ENCODE measurements at regions of chr19 and their contacts with region 1.

Region 1: DNA sequence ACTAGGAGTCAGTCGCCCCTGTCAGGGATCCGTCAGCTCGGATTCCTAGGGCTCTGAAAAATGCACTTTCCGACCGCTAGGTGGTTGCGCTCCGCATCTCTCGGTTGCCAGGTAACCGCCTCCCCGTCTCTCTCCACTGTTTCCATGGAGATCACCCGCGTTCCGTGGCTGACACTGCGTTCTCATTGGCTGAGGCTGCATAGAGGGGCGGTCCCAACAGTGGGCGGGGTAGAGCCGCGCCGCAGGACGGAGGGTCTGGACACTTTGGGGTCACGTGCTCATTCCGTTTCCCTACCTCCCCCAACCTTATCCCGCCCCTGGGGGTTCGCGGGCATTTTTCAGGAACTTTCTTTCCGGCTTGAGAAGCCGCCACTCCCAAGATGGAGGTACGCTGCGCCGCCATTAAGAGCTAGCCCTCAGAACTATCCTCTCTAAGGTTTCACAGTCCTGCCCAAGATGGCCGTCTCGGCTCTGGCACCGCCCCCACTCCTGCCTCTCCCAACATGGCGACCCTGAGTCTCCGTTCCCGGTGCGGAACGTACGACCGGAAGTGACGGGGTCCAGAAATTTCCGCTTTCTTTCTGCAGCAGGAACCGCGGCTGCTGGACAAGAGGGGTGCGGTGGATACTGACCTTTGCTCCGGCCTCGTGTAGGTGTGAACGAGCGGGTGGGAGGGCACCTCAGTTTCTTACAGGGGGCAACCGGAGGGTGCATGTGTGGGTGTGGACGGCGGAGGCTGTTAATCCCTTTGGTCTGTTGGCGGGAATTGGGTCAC is at the starts of genes ODAD3 and PRKCSH:
- DNase-seq: peak; percentile 90 to 99 (median 97)
- ATAC-seq: peak; percentile 97
- H3K4me3 ChIP-seq: peak within 1 kb of the TSS; percentile 77
- H3K4me3 Mint-ChIP-seq: peak within 1 kb of the TSS; percentile 96 to 100 (median 99)
- H3K27ac ChIP-seq: peak within 1 kb of the TSS; percentile 77
- H3K27ac Mint-ChIP-seq: peak within 1 kb of the TSS; percentile 91 to 98 (median 97)
- H3K4me1 ChIP-seq: peaks cover 13 to 16% of the 10 kb centered on the region in 2 donors
- H3K4me1 Mint-ChIP-seq: peaks cover 10 to 34% (median 24%) of the 10 kb centered on the region in 7 donors
- H3K27me3 ChIP-seq: no peaks in the 10 kb centered on the region
- H3K27me3 Mint-ChIP-seq: peaks cover 0 to 8% (median 0%) of the 10 kb centered on the region in 5 donors
- total RNA-seq, gene ODAD3: not detected
- total RNA-seq, gene PRKCSH: 254 to 332 (median 288) TPM

Region 2: GRCh38 chr19:11090054-11090900 is 345.0 kb before region 1 on chr19:
- CTCF ChIA-PET with region 1: no interaction called
- POLR2A ChIA-PET with region 1: no interaction called
- intact Hi-C with region 1: loop called in 1 of 2 experiments (anchors 1 kb)
- DNase-seq: peak; percentile 89 to 97 (median 96)
- ATAC-seq: peak; percentile 90
- H3K4me3 ChIP-seq: peak overlapping the region; percentile 83
- H3K4me3 Mint-ChIP-seq: peak overlapping the region; percentile 85 to 94 (median 89)
- H3K27ac ChIP-seq: peak overlapping the region; percentile 91
- H3K27ac Mint-ChIP-seq: peak overlapping the region; percentile 88 to 99 (median 96)
- H3K4me1 ChIP-seq: peaks cover 24 to 41% of the 10 kb centered on the region in 2 donors
- H3K4me1 Mint-ChIP-seq: peaks cover 13 to 51% (median 44%) of the 10 kb centered on the region in 7 donors
- H3K27me3 ChIP-seq: no peaks in the 10 kb centered on the region
- H3K27me3 Mint-ChIP-seq: peaks cover 0 to 2% (median 0%) of the 10 kb centered on the region in 5 donors

Region 3: DNA sequence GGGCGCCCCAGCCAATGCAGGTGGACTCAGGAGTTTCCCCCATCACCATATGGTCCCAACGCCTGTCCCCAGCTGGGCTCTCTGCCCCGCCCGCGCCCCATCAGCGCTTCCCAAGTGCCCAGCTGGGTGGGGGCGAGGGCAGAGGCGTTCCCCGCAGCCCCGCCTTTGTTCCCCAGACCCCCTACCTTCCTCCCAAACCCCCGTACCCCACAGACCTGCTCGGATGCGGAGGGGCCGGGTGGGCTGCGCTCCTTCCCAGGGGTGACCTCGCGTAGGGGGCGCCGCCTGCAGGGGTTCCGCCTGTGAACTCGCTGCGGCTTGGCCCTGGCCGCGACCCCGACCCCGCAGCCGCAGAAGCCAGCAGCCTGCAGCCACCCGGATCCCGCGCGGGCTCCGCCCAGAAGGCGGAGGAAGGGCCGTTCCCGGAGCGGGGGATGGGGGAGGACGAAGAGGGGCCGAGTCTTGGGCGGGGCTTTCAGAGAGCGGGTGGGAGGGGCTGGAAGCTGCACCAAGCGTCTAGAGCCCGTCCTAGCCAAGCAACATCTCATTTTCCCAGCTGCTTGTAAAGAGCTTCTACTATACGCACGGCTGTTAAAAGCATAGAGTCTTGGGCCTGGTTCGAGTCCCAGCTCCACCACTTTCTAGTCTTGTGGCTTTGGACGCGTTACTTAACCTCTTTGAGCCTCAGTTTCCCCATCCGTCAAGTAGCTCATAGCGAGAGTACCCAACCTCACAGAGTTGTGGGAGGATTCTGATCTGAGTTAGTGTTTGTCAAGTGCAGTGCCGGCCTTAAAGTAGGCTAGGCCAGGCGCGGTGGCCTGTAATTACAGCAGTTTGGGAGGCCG is 95.8 kb before region 1 on chr19 and contains the start of gene RAB3D:
- CTCF ChIA-PET with region 1: no interaction called
- POLR2A ChIA-PET with region 1: no interaction called
- intact Hi-C with region 1: loop called in 1 of 2 experiments (anchors 1 kb)
- DNase-seq: peak; percentile 32 to 85 (median 57)
- ATAC-seq: peak; percentile 93
- H3K4me3 ChIP-seq: peak within 1 kb of the TSS; percentile 75
- H3K4me3 Mint-ChIP-seq: peak within 1 kb of the TSS; percentile 75 to 88 (median 80)
- H3K27ac ChIP-seq: peak within 1 kb of the TSS; percentile 63
- H3K27ac Mint-ChIP-seq: peak within 1 kb of the TSS in 6 of 9 donors; percentile 46 to 86 (median 64)
- H3K4me1 ChIP-seq: peaks cover 5 to 28% of the 10 kb centered on the region in 2 donors
- H3K4me1 Mint-ChIP-seq: peaks cover 0 to 35% (median 28%) of the 10 kb centered on the region in 7 donors
- H3K27me3 ChIP-seq: no peaks in the 10 kb centered on the region
- H3K27me3 Mint-ChIP-seq: no peaks in the 10 kb centered on the region
- total RNA-seq, gene RAB3D: 7.4 to 38.2 (median 8.8) TPM

Region 4: DNA sequence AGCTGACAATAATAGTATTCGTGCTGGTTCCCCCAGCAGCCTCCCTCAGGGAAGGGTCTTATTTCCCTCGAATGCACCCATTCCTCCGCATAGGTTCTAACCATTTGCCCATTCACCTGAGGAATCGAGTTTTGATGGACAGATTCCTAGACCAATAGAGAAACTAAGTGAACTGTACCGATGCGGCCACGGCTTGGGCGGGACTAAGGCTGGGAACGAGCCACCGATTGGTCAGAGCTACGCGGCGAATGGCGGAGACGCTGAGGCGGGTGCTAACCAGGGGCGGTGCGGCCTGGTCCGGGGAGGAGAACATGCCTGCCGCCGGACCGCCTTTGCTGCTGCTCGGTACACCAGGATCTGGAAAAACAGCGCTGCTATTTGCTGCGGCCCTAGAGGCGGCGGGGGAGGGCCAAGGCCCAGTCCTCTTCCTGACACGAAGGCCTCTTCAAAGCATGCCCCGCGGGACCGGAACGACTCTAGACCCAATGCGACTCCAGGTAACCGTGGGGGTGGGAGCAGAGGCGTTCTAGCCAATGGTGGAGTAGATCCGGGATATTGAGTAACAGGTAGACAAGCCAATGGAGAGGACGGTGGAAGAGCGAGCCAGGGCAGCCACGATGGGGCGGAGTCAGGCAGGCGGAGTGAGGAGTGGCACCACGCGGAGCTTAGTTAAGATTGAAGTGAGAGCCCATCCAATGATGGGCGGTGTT is 60.7 kb before region 1 on chr19 and contains the start of gene SWSAP1:
- CTCF ChIA-PET with region 1: interaction called, 3 read pairs
- POLR2A ChIA-PET with region 1: interaction called, 24 read pairs
- intact Hi-C with region 1: loop called (anchors 1 kb)
- DNase-seq: peak; percentile 87 to 99 (median 99)
- ATAC-seq: peak; percentile 94
- H3K4me3 ChIP-seq: peak within 1 kb of the TSS; percentile 92
- H3K4me3 Mint-ChIP-seq: peak within 1 kb of the TSS in 3 of 10 donors; percentile 31 to 56 (median 45)
- H3K27ac ChIP-seq: peak within 1 kb of the TSS; percentile 92
- H3K27ac Mint-ChIP-seq: peak within 1 kb of the TSS in 1 of 9 donors; percentile 22
- H3K4me1 ChIP-seq: peaks cover 21 to 30% of the 10 kb centered on the region in 2 donors
- H3K4me1 Mint-ChIP-seq: peaks cover 12 to 40% (median 28%) of the 10 kb centered on the region in 7 donors
- H3K27me3 ChIP-seq: no peaks in the 10 kb centered on the region
- H3K27me3 Mint-ChIP-seq: no peaks in the 10 kb centered on the region
- total RNA-seq, gene SWSAP1: 3.4 to 4.2 (median 4.0) TPM

Region 5: DNA sequence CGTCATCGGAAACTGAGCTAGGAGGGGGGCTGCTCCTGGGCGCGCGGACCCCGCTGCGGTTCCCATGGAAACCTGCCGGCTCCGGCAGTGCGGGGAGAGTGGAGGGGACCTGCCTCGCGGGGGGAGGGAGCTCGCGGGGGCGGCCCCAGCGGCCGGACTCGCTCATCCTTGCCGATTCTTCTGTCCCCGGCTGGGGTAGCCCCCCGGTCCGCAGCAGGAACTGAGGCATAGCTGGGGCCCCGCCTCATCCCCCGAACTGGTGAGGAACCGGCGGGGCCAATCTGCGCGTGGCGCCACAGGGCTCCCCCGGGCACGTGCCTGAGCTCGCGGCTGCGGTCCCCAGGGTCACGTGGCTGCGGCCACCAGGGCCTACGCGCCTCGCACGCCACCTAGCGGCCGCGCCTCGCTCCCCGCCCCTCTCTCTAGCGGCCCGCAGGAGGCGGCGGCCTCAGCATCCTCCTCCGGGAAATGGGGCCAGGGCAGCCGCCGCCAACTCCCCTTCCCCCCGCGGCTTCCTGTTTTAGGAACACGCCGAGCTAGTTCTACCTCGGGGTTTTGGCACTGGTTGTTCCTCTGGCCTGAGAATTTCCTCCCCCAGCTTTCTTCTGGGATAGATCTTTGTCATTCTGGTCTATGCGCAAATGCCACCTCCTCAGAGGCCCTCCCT is 47.3 kb after region 1 on chr19:
- CTCF ChIA-PET with region 1: interaction called, 3 read pairs
- POLR2A ChIA-PET with region 1: no interaction called
- intact Hi-C with region 1: loop called (anchors 1 kb)
- DNase-seq: peak; percentile 63 to 92 (median 76)
- ATAC-seq: peak; percentile 92
- H3K4me3 ChIP-seq: peak overlapping the region; percentile 19
- H3K4me3 Mint-ChIP-seq: peak overlapping the region in 9 of 10 donors; percentile 52 to 83 (median 71)
- H3K27ac ChIP-seq: no peak overlapping the region
- H3K27ac Mint-ChIP-seq: peak overlapping the region in 2 of 9 donors; percentile 21 to 85
- H3K4me1 ChIP-seq: peaks cover 15 to 20% of the 10 kb centered on the region in 2 donors
- H3K4me1 Mint-ChIP-seq: peaks cover 12 to 24% (median 21%) of the 10 kb centered on the region in 7 donors
- H3K27me3 ChIP-seq: peaks cover 8 to 17% of the 10 kb centered on the region in 2 donors
- H3K27me3 Mint-ChIP-seq: peaks cover 25 to 37% (median 33%) of the 10 kb centered on the region in 5 donors

Region 6: DNA sequence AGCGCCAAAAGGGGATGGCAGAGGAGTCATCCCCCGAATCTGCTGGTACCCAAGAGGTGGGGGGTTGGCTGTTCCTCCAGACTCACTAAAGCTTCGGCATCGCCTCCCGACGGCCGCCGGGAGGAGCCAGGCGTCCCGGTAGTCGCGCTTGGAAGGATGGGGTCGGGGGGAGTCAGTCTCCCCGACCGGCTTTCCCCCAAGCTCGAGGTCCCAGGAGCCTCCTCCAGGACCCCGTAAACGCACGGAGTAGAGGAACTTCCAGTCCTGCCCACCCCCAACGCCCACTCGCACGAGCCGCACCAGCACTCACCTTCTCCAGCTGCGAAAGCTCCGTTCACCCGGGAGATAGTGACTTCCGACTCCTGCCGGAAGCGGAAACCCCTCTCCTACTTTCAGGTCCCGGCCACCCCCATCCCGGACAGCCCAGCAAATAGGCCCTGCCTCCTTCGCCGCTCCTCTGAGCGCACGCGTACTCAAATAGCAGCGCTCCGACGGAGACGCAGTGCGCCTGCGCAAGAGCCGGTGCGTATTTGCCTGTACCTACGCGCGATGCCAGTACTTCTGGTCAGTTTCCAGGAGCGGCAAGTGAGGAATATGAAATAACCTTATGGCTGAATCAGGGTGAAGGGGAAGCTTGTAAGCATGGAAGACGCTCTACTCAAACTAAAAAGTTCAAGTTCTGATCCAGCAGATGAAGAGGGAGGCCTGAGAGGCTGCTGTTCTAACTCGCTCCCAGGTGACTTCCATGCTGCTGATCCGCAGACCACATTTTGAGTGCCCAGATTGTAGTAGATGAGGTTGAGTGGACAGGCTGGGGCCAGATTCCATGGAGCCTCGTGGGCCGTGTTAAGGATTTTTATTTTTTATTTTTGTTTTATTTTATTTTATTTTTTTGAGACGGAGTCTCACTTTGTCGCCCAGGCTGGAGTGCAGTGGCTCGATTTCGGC is 123.9 kb after region 1 on chr19 and contains the start of gene ELOF1:
- CTCF ChIA-PET with region 1: no interaction called
- POLR2A ChIA-PET with region 1: no interaction called
- intact Hi-C with region 1: loop called (anchors 1 kb)
- DNase-seq: peak; percentile 90 to 97 (median 94)
- ATAC-seq: peak; percentile 97
- H3K4me3 ChIP-seq: peak within 1 kb of the TSS; percentile 94
- H3K4me3 Mint-ChIP-seq: peak within 1 kb of the TSS; percentile 89 to 99 (median 96)
- H3K27ac ChIP-seq: peak within 1 kb of the TSS; percentile 82
- H3K27ac Mint-ChIP-seq: peak within 1 kb of the TSS; percentile 84 to 98 (median 95)
- H3K4me1 ChIP-seq: peaks cover 16 to 19% of the 10 kb centered on the region in 2 donors
- H3K4me1 Mint-ChIP-seq: peaks cover 34 to 58% (median 45%) of the 10 kb centered on the region in 7 donors
- H3K27me3 ChIP-seq: no peaks in the 10 kb centered on the region
- H3K27me3 Mint-ChIP-seq: no peaks in the 10 kb centered on the region
- total RNA-seq, gene ELOF1: 34.0 to 59.8 (median 41.9) TPM

Region 7: DNA sequence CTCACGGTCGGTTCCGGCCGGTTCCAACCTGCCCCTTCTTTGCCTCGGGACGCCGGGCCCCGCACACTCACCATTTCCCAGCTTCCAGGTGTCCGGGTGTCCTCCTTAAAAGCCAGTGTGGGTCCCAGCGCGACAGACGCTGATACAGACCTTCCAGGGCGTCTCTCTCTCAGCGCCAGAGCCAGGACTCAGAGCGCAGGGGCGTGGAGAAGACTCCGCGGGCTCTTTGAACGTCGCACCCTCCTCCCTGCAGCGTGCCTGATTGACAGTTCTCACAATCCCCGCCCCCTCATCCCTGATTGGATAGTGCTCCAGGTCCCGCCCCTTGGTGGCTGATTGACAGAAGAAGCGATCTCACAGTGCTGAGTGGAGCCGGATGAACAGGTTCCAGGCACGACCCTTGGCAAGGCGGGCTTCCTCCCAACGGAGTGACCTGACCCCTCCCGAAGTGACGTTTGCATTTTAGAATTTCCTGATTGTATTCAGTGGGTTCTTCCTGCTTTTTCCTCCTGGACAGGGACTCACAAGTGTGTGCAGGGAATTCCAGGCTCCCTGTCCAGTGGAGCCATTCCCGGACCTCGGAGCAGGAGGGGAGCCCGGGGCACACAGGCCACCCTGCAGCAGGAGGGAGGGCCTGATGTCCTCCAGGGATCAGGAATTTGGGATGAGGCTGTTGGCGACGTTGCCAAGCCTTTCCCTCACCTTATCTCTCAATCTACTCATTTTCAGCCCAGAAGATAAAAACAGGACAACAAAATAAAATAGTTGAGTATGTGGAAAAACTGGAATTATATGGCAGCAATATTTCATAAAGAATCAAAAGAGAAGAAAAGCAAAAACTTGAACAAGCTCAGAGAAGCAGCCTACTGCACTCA is 303.7 kb after region 1 on chr19 and contains the start of gene ZNF823:
- CTCF ChIA-PET with region 1: no interaction called
- POLR2A ChIA-PET with region 1: no interaction called
- intact Hi-C with region 1: loop called (anchors 1 to 2 kb)
- DNase-seq: peak; percentile 85 to 98 (median 96)
- ATAC-seq: peak; percentile 100
- H3K4me3 ChIP-seq: peak within 1 kb of the TSS; percentile 75
- H3K4me3 Mint-ChIP-seq: peak within 1 kb of the TSS; percentile 94 to 100 (median 98)
- H3K27ac ChIP-seq: peak within 1 kb of the TSS; percentile 73
- H3K27ac Mint-ChIP-seq: peak within 1 kb of the TSS; percentile 82 to 98 (median 92)
- H3K4me1 ChIP-seq: peaks cover 0 to 11% of the 10 kb centered on the region in 2 donors
- H3K4me1 Mint-ChIP-seq: peaks cover 13 to 36% (median 25%) of the 10 kb centered on the region in 7 donors
- H3K27me3 ChIP-seq: no peaks in the 10 kb centered on the region
- H3K27me3 Mint-ChIP-seq: peaks cover 0 to 6% (median 4%) of the 10 kb centered on the region in 5 donors
- total RNA-seq, gene ZNF823: 1.8 to 6.8 (median 2.8) TPM

Measured in naive thymus-derived CD4-positive, alpha-beta T cell (primary cell).